Dendritic cell treated with granulocyte-macrophage colony-stimulating factor and Interleukin-4, amounts not matched to agents 40 ng/mL and 50 ng/mL, for 4 days (primary cell): ENCODE measurements at regions of chr2 and their contacts with region 1.

Region 1: DNA sequence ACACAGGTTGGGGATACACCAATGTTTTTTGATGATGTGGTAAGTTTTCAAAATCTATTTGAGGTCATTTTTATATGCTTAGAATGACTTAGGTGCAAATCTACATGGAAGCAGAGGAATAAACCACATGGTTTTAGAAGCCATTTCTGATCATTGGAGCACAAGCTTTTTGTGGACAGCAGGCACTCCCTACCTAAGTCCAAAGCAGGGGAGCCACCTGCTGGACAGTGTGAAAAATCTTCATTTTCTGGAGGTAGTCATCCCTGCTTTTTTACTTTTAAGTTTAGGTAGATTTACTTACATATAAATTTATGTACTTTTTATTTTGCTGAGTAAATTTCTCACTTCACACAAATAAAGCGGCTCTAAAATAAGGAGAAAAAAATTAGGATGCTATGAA is 323.2 kb downstream of the PLCL1 start:
- H3K4me3 Mint-ChIP-seq: no peak overlapping the region
- H3K27ac Mint-ChIP-seq: no peak overlapping the region
- H3K4me1 Mint-ChIP-seq: peaks cover 26% of the 10 kb centered on the region
- H3K27me3 Mint-ChIP-seq: no peaks in the 10 kb centered on the region

Region 2: GRCh38 chr2:198053776-198054698 is 73.6 kb before region 1 on chr2:
- intact Hi-C with region 1: loop called (anchors 10 kb)
- H3K4me3 Mint-ChIP-seq: no peak overlapping the region
- H3K27ac Mint-ChIP-seq: no peak overlapping the region
- H3K4me1 Mint-ChIP-seq: peaks cover 7% of the 10 kb centered on the region
- H3K27me3 Mint-ChIP-seq: no peaks in the 10 kb centered on the region

Region 3: DNA sequence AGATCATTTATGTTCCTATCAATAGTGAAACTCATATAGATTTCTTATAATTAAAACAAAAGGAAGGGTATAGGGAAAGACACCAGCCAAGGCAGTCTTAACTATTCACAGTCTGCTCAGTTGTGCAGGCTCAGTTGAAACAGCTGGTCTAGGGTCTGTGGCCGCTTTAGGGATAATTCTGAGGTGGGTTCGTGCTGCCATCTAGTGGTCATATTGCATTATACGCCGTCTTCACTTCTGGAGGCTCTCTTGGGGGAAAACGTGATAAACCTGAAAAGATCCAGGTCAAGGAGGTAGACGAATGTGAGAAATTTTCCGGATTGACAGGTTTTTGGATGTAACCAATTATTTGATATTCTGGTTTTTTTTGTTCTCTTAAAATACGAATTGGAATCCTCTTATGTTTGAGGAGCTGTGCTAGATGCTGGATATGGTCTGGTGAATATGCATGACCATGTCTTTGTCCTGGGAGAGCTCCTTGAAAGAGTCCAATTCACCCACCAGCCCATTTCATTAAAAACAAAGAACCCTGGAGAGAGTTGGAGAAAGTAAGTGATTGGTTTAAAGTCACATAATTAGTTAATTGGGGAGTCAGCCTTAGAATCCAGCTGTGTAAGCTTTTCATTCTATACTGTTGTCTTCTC is 169.2 kb after region 1 on chr2:
- intact Hi-C with region 1: loop called (anchors 1 kb)
- H3K4me3 Mint-ChIP-seq: no peak overlapping the region
- H3K27ac Mint-ChIP-seq: no peak overlapping the region
- H3K4me1 Mint-ChIP-seq: no peaks in the 10 kb centered on the region
- H3K27me3 Mint-ChIP-seq: peaks cover 4% of the 10 kb centered on the region